Vagina (tissue), 2 donors: ENCODE measurements at regions of chr11 and their contacts with region 1.

Region 1: DNA sequence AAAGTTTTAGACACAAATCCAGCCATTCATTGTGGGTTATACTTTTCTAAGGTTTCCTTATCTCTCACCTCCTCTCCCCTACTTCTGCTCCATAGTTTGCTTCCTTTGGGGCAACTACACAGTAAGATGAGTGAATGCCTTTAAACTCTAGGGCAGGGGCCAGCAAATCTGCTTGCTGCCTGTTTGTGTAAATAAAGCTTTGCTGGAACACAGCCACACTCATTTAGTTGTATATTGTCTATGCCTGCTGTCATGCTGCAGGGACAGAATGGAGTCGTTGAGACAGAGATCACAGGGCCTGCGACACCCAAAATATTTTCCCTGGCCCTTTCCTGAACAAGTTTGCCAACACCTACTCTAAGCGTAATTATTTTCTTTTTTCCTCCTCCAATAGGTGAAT is 58.7 kb downstream of the TECTA start:
- DNase-seq: no peak
- H3K4me3 ChIP-seq: no peak overlapping the region
- H3K27ac ChIP-seq: no peak overlapping the region
- H3K4me1 ChIP-seq: no peaks in the 10 kb centered on the region
- H3K27me3 ChIP-seq: no peaks in the 10 kb centered on the region
- CTCF ChIP-seq: no peak
- POLR2A ChIP-seq: no peak

Region 2: DNA sequence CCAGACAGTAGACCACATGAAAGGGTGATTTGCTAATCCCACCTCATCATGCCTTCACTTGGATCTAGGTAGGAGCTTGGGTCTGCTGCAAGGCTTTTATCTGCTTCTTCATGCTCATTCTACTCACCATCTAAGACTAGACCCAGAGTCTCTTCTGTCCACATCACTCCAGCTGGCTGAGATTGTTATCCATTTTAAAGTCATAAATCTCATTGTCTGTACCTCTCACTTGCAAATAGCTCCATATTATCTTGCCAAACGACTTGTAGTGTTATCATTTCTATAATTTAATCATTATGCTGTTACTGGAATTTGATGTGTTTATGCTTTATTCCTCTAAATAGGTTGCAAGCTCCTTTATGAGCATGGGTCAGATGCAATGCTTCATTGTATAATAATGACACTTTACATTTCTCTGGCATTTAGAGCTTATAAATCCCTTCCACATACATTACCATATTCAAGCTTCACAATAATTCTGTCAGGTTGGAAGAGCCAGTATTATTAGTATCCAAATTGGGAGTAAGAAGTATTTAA is 547.2 kb after region 1 on chr11:
- intact Hi-C with region 1: loop called (anchors 5 kb)
- DNase-seq: no peak
- H3K4me3 ChIP-seq: no peak overlapping the region
- H3K27ac ChIP-seq: no peak overlapping the region
- H3K4me1 ChIP-seq: no peaks in the 10 kb centered on the region
- H3K27me3 ChIP-seq: no peaks in the 10 kb centered on the region
- CTCF ChIP-seq: no peak
- POLR2A ChIP-seq: no peak